RWPE1 (cell line): ENCODE measurements at regions of chr1 and their contacts with region 1.

Region 1: GRCh38 chr1:205485338-205486228 is 18.9 kb upstream of the CDK18 start:
- DNase-seq: peak; percentile 94
- H3K27ac ChIP-seq: no peak overlapping the region
- CTCF ChIP-seq: peak; percentile 97

Region 2: DNA sequence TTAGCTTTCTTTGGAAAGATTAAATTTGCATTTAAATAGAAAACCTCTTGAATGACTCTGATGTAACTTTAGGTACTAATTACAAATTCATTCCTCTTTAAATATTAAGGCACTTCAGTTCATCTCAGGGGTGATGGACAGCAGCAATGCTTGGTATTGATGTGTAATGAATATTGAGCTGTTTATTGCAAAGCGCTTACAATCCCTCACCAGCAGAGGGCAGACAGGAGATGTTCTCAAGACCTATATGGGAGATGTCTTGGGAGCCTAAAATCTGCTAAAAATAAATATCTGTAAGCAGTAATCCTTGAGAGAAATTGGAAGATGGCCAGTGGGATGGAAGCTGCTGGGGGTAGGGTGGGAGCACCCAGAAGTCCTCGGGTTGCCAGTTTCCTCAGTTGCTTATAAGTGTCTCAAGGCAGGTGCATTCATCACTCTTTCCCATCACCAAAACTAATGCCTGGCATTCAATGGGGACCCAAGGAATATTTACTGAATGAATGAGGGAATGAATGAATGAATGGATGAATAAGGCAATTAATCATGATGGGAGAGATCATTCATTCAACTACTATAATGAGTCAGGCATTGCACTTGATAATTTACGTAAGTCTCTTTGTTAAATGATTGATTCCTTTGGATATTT is 131.2 kb before region 1 on chr1:
- CTCF ChIA-PET with region 1: interaction called, 67 read pairs
- POLR2A ChIA-PET with region 1: no interaction called
- DNase-seq: peak; percentile 50
- H3K27ac ChIP-seq: no peak overlapping the region
- CTCF ChIP-seq: peak; percentile 90

Region 3: GRCh38 chr1:205396967-205397616 is 88.5 kb before region 1 on chr1:
- CTCF ChIA-PET with region 1: interaction called, 94 read pairs
- POLR2A ChIA-PET with region 1: no interaction called
- DNase-seq: peak; percentile 87
- H3K27ac ChIP-seq: no peak overlapping the region
- CTCF ChIP-seq: peak; percentile 74

Region 4: GRCh38 chr1:205430696-205431305 is 54.8 kb before region 1 on chr1:
- CTCF ChIA-PET with region 1: interaction called, 64 read pairs
- POLR2A ChIA-PET with region 1: interaction called, 3 read pairs
- DNase-seq: peak; percentile 63
- H3K27ac ChIP-seq: no peak overlapping the region; the same call in 1 of the 2 replicates
- CTCF ChIP-seq: peak; percentile 92

Region 5: DNA sequence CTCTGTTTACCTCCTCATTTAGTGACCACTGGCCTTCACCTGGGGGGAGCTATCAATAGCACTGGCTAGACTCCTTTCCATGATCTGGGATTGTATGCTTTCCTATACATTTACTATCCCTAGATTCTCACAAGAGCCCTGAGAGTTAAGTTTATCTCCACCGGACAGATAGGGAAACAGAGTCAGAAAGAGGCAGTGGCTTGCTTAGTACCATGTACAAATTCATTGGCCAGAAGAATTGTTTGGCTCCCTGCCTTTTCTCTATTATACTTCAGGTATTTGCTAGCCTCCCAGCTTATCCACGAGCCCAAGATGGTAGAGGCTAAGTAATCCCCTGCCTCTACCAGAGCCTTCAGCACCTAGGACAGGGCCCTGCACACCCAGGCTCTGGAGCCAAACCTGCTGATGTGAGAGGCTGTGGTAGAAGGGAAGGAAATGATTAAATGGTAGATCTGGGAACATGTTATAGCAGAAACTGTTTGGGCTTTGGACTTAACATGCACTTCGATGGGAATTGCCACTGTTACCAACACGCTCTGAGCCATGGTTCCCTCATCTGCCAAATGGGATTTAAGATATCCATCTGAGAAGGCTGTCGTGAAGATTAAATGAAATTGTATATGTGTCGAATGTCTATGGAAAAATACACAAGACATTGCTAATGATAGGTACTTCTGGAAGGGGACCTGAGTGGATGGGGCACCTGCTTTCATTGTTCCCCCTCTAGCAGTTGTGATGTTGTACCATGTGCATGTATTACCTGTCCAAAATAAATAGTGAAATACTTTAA is 26.6 kb before region 1 on chr1:
- CTCF ChIA-PET with region 1: interaction called, 27 read pairs
- POLR2A ChIA-PET with region 1: no interaction called
- DNase-seq: no peak
- H3K27ac ChIP-seq: no peak overlapping the region
- CTCF ChIP-seq: no peak

Region 6: GRCh38 chr1:205512059-205513045 is 26.8 kb after region 1 on chr1:
- CTCF ChIA-PET with region 1: interaction called, 16 read pairs
- POLR2A ChIA-PET with region 1: no interaction called
- DNase-seq: no peak
- H3K27ac ChIP-seq: peak overlapping the region; percentile 10
- CTCF ChIP-seq: no peak

Region 7: DNA sequence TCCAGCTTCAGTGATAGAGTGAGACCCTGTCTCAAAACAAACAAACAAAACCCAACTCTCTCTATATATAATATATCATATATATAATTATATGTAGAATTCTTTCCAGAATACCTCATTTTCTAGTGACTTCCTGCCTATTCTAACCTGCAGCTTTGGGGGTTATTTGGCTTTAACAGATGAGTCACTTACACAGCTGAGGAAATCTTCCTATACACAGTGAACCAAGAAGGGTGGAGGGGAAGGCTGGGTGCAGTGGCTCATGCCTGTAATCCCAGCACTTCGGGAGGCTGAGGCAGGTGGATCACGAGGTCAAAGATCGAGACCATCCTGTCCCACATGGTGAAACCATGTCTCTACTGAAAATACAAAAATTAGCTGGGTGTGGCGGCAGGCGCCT is 280.5 kb after region 1 on chr1:
- CTCF ChIA-PET with region 1: no interaction called
- POLR2A ChIA-PET with region 1: no interaction called
- DNase-seq: peak; percentile 70
- H3K27ac ChIP-seq: peak overlapping the region; percentile 38; the same call in 1 of the 2 replicates
- CTCF ChIP-seq: no peak